ENCODE measurements at regions of chr20 and their contacts with region 1.

Region 1: GRCh38 chr20:63234739-63235398 is 836 bp upstream of the BIRC7 start:
- DNase-seq: peak; percentile 58
- ATAC-seq: peak; percentile 52
- H3K4me3 Mint-ChIP-seq: peak overlapping the region; percentile 15
- H3K27ac Mint-ChIP-seq: no peak overlapping the region
- H3K4me1 Mint-ChIP-seq: peaks cover 8% of the 10 kb centered on the region
- H3K27me3 Mint-ChIP-seq: peaks cover 21% of the 10 kb centered on the region
- CTCF ChIP-seq: peak; percentile 69

Region 2: GRCh38 chr20:63216041-63216848 is 18.6 kb before region 1 on chr20 and contains the start of gene YTHDF1:
- CTCF ChIA-PET with region 1: interaction called, 10 read pairs
- POLR2A ChIA-PET with region 1: interaction called, 4 read pairs
- intact Hi-C with region 1: no loop called
- DNase-seq: peak; percentile 97
- ATAC-seq: peak; percentile 97
- H3K4me3 Mint-ChIP-seq: peak within 1 kb of the TSS; percentile 91
- H3K27ac Mint-ChIP-seq: peak within 1 kb of the TSS; percentile 88
- H3K4me1 Mint-ChIP-seq: peaks cover 41% of the 10 kb centered on the region
- H3K27me3 Mint-ChIP-seq: no peaks in the 10 kb centered on the region
- CTCF ChIP-seq: no peak
- total RNA-seq, gene YTHDF1: 31.0 TPM

Measured in activated CD8-positive, alpha-beta T cell treated with anti-CD3 and anti-CD28 coated beads for 36 hours (primary cell).